CD4-positive, alpha-beta T cell (primary cell): ENCODE measurements at regions of chr11 and their contacts with region 1.

Region 1: DNA sequence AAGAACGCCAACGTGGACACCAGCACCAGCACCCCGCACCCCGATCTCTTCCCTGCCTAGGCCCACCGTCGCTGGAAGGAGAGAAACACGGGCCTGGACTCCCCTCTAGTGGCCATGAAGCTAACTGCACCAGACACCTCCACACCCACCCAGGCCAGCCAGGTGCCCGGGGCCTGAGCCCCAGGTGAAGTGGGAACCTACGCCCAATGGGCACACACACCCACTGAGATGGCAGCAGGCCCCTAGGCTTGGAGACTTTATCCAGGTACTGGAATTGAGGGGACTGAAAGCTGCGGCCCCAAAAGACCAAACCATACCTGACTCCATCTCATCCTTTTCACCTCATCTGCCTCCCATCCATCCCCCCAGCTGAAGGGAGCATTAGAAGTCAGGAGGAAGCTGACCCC is 81.0 kb downstream of the BUD13 start:
- DNase-seq: peak; percentile 26 to 70 (median 45)
- ATAC-seq: peak; percentile 83
- H3K4me3 ChIP-seq: no peak overlapping the region
- H3K4me3 Mint-ChIP-seq: no peak overlapping the region
- H3K27ac ChIP-seq: no peak overlapping the region
- H3K27ac Mint-ChIP-seq: no peak overlapping the region
- H3K4me1 ChIP-seq: no peaks in the 10 kb centered on the region
- H3K4me1 Mint-ChIP-seq: no peaks in the 10 kb centered on the region
- H3K27me3 ChIP-seq: peaks cover 0 to 2% of the 10 kb centered on the region in 2 experiments
- H3K27me3 Mint-ChIP-seq: peaks cover 10% of the 10 kb centered on the region
- CTCF ChIP-seq: peak; percentile 78

Region 2: DNA sequence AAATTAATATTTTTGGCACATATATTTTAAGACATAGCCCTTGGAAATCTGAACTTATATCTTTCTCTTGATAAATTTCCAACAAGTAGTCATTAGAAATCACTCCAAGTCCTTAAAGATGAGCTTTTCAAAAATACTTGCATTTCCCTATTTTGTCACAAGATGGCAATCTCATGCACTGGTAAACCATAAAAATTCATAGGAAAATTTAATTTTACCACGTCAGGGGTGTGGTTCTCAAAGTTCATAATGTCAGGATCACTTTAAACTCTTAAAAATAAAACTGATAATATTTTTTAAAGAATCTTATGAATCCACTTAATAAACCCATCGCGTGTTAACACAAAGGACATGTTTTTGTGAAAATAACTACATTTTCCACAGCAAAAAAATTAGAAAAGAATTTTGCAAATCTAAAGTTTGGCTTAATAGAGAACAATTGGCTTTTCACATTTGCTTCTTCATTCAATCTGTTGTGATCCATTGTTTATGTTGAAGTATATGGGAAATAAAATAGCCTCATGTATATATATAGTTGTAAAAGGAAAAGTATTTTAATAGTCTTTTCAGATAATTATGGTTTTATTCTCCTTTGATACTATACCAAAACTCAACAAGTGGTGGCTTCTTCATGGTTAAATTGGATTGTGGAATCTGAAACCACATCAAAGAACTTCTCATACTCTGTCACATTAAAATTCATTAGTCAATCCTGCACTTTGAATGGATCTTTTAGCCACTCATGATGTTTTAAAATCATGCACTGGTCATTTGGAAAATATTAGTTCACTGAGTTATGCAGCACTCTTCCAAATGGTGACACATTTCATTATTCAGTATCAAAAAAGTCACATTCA is 1356.6 kb before region 1 on chr11:
- CTCF ChIA-PET with region 1: interaction called, 6 read pairs
- POLR2A ChIA-PET with region 1: no interaction called
- intact Hi-C with region 1: loop called in 1 of 2 experiments (anchors 5 kb)
- DNase-seq: peak in 3 of 14 experiments; percentile 10 to 28 (median 25)
- ATAC-seq: no peak
- H3K4me3 ChIP-seq: no peak overlapping the region
- H3K4me3 Mint-ChIP-seq: no peak overlapping the region
- H3K27ac ChIP-seq: no peak overlapping the region
- H3K27ac Mint-ChIP-seq: no peak overlapping the region
- H3K4me1 ChIP-seq: no peaks in the 10 kb centered on the region
- H3K4me1 Mint-ChIP-seq: no peaks in the 10 kb centered on the region
- H3K27me3 ChIP-seq: no peaks in the 10 kb centered on the region
- H3K27me3 Mint-ChIP-seq: no peaks in the 10 kb centered on the region
- CTCF ChIP-seq: peak; percentile 51

Region 3: DNA sequence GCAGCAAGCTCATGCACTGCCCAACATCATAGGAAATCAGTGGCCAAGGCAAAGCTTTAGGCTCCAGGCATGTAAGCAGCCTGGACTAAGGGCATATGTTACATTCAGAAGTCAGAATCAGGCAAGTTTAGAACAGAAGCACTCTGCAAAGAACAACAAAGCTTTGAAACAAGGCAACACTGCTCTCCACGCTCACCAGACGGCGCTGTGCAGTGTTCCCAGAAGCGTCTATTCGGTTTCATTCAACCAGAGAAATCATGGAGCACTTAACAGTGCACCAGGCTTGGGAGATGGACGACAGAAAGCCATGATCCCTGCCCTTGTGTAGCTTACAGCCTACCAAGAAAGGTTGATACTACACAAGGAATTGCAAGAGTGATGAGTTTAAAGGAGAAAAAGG is 474.8 kb before region 1 on chr11:
- CTCF ChIA-PET with region 1: no interaction called
- POLR2A ChIA-PET with region 1: no interaction called
- intact Hi-C with region 1: loop called (anchors 5 kb)
- DNase-seq: peak in 2 of 14 experiments; percentile 2 to 7
- ATAC-seq: no peak
- H3K4me3 ChIP-seq: no peak overlapping the region
- H3K4me3 Mint-ChIP-seq: no peak overlapping the region
- H3K27ac ChIP-seq: no peak overlapping the region
- H3K27ac Mint-ChIP-seq: no peak overlapping the region
- H3K4me1 ChIP-seq: no peaks in the 10 kb centered on the region
- H3K4me1 Mint-ChIP-seq: no peaks in the 10 kb centered on the region
- H3K27me3 ChIP-seq: no peaks in the 10 kb centered on the region
- H3K27me3 Mint-ChIP-seq: peaks cover 21% of the 10 kb centered on the region
- CTCF ChIP-seq: peak; percentile 15